ENCODE measurements at regions of chr17 and their contacts with region 1.

Region 1: GRCh38 chr17:55285340-55286301 is 20.9 kb downstream of the HLF start:
- DNase-seq: peak; percentile 99
- ATAC-seq: peak; percentile 37
- H3K4me3 ChIP-seq: peak overlapping the region; percentile 1 to 63 (median 3); a peak in 4 of 6 replicates
- H3K27ac ChIP-seq: peak overlapping the region; percentile 98
- H3K4me1 ChIP-seq: peaks cover 100% of the 10 kb centered on the region
- H3K27me3 ChIP-seq: no peaks in the 10 kb centered on the region
- CTCF ChIP-seq: no peak
- EP300 ChIP-seq: peak; percentile 82 to 100; a peak in 3 of 4 replicates
- POLR2A ChIP-seq: peak; percentile 46 to 71
- RAD21 ChIP-seq: no peak; the same call in 1 of the 2 replicates

Region 2: GRCh38 chr17:54968262-54968987 is 317.2 kb before region 1 on chr17 and contains the starts of genes COX11 and STXBP4:
- CTCF ChIA-PET with region 1: no interaction called
- POLR2A ChIA-PET with region 1: interaction called, 4 read pairs
- in situ Hi-C with region 1: no loop called
- intact Hi-C with region 1: loop called (anchors 10 kb)
- DNase-seq: peak; percentile 97
- ATAC-seq: peak; percentile 89
- H3K4me3 ChIP-seq: peak within 1 kb of the TSS; percentile 79 to 99 (median 93)
- H3K27ac ChIP-seq: peak within 1 kb of the TSS; percentile 82
- H3K4me1 ChIP-seq: peaks cover 68% of the 10 kb centered on the region
- H3K27me3 ChIP-seq: no peaks in the 10 kb centered on the region; a peak in 1 of 5 replicates
- CTCF ChIP-seq: peak; percentile 62
- EP300 ChIP-seq: peak in 1 of 2 experiments; percentile 11; a peak in 1 of 4 replicates
- POLR2A ChIP-seq: peak; percentile 97 to 98
- RAD21 ChIP-seq: peak; percentile 36; the same call in 1 of the 2 replicates
- total RNA-seq, gene COX11: 203 and 230 TPM in 2 replicates
- total RNA-seq, gene STXBP4: 36.1 and 53.9 TPM in 2 replicates

Region 3: DNA sequence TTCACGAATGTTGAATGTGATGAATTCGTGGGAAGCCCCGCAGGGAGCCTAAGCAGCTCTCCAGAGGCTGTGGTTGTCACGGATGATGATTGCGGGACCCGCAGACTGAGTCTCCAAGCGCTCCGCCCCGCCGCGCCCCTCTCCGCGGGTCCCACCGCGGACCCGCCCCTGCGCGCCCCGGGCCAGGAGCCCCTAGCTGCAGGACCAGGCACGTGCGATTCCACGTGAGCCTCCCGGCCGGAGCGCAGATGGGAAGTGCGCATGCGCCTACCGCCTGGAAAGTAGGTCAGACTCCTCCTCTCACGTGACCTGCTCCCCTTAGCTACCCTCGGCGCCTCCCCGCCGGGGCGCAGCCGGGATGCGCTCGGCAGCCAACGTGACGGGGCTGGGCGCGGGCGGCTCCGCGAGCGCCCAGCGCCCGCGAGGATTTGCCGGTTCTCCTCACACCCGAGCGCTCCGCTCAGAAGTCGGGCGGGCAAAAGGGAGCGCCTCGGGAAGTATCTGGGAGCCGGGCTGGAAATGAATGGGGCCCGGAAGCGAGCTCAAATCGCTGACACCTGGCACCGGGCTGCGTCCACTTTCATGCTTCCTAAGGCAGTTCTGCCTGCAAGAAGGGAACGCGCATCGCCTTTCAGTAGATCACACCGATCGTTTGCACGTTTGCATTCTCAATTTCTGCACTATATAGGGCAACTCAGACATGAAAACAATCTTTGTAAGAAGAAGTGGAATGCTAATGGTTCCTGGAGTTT is 47.3 kb before region 1 on chr17:
- CTCF ChIA-PET with region 1: no interaction called
- POLR2A ChIA-PET with region 1: interaction called, 81 read pairs
- in situ Hi-C with region 1: no loop called
- intact Hi-C with region 1: no loop called
- DNase-seq: peak; percentile 94
- ATAC-seq: peak; percentile 99
- H3K4me3 ChIP-seq: peak overlapping the region; percentile 61 to 77 (median 70)
- H3K27ac ChIP-seq: peak overlapping the region; percentile 72
- H3K4me1 ChIP-seq: peaks cover 23% of the 10 kb centered on the region
- H3K27me3 ChIP-seq: no peaks in the 10 kb centered on the region; a peak in 1 of 5 replicates
- CTCF ChIP-seq: peak; percentile 22; the same call in 1 of the 2 replicates
- EP300 ChIP-seq: peak in 1 of 2 experiments; percentile 30; a peak in 2 of 4 replicates
- POLR2A ChIP-seq: peak; percentile 66
- RAD21 ChIP-seq: peak; percentile 26

Region 4: GRCh38 chr17:55273579-55274354 is 11.9 kb before region 1 on chr17:
- CTCF ChIA-PET with region 1: no interaction called
- POLR2A ChIA-PET with region 1: interaction called, 626 read pairs
- in situ Hi-C with region 1: no loop called
- intact Hi-C with region 1: loop called (anchors 1 kb)
- DNase-seq: no peak
- ATAC-seq: peak; percentile 46
- H3K4me3 ChIP-seq: peak overlapping the region; percentile 81 to 93 (median 83)
- H3K27ac ChIP-seq: peak overlapping the region; percentile 84
- H3K4me1 ChIP-seq: peaks cover 72% of the 10 kb centered on the region
- H3K27me3 ChIP-seq: peaks cover 0 to 3% of the 10 kb centered on the region in 2 experiments; a peak in 1 of 5 replicates
- CTCF ChIP-seq: 0 out of 2 replicates have a peak, but pooled peaks have one; percentile 6
- EP300 ChIP-seq: no peak
- POLR2A ChIP-seq: peak in 1 of 2 experiments; percentile 48; a peak in 1 of 4 replicates
- RAD21 ChIP-seq: 0 out of 2 replicates have a peak, but pooled peaks have one; percentile 14

Region 5: GRCh38 chr17:55308613-55309391 is 23.2 kb after region 1 on chr17:
- CTCF ChIA-PET with region 1: no interaction called
- POLR2A ChIA-PET with region 1: interaction called, 119 read pairs
- in situ Hi-C with region 1: no loop called
- intact Hi-C with region 1: loop called (anchors 1 kb)
- DNase-seq: no peak
- ATAC-seq: no peak
- H3K4me3 ChIP-seq: no peak overlapping the region
- H3K27ac ChIP-seq: peak overlapping the region; percentile 86
- H3K4me1 ChIP-seq: peaks cover 100% of the 10 kb centered on the region
- H3K27me3 ChIP-seq: no peaks in the 10 kb centered on the region
- CTCF ChIP-seq: no peak
- EP300 ChIP-seq: no peak
- POLR2A ChIP-seq: peak; percentile 38 to 45; a peak in 2 of 4 replicates
- RAD21 ChIP-seq: no peak

Region 6: DNA sequence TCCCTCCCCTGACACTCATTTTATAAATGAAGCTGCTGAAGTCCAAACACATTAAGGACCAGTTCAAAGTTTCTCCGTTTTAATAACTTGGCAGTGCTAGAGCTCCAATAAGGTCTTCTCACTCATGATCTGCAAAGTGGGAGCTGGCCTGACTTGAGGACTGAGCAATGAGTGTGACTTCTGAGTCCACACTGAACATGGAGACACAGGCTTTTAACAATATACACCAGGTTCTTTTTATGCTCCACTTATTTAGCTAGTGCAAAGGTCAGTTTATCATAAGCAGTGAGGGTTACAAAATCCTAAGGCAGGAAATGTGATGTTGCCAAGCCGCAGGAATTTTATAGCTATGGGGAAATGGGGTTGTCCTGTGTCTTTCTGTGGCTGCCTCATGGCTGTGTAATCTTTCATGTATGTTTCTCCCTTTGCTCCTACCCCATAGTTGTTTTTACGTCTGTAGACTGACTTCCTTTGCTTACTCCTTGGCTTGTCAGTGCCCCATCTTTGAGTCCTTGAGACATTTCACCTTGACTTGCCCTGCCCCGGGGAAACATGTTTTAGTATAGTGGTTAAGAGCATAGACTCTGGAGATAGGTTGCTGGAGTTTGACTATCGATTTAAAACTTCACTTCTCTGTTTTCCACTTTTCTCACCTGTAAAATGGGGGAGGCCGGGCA is 148.1 kb after region 1 on chr17:
- CTCF ChIA-PET with region 1: no interaction called
- POLR2A ChIA-PET with region 1: interaction called, 29 read pairs
- in situ Hi-C with region 1: no loop called
- intact Hi-C with region 1: loop called (anchors 5 kb)
- DNase-seq: peak; percentile 99
- ATAC-seq: peak; percentile 89
- H3K4me3 ChIP-seq: peak overlapping the region in 2 of 3 experiments; percentile 6 to 44; a peak in 2 of 6 replicates
- H3K27ac ChIP-seq: peak overlapping the region; percentile 92
- H3K4me1 ChIP-seq: peaks cover 80% of the 10 kb centered on the region
- H3K27me3 ChIP-seq: no peaks in the 10 kb centered on the region
- CTCF ChIP-seq: no peak
- EP300 ChIP-seq: peak; percentile 86 to 95; a peak in 3 of 4 replicates
- POLR2A ChIP-seq: peak; percentile 64 to 93
- RAD21 ChIP-seq: no peak

Region 7: DNA sequence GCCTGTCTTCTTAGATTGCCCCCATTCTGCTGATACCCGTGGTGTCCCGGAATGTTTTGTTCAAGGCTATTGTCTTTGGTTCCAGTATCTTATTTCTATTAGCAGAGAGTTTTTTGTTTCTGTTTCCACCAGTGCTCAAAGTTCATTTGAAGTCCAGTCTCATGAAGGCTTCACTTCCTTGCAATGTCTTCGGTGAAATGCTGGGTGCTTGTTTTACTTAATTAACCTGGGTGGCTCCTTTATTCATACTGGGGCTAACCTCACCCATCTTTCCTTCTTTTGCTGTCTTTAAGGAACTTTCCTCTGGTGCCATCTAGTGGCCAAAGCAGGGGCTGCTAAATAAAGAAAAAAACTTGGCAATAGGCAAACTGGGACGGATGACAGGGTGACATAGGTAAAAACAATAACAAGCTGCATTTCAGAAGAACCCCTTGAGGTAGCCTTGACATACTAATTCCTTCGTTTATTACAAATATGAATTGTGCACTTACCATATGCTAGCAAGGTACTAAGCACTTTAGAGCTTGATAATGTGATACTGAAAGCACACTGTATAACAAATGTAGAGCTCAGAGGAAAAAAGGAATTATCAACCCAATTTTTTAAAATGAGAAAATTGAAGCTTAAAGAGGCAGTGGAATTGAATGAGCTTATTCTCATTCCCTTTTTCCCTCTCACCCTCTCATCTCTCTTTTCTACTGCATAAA is 228.4 kb after region 1 on chr17:
- CTCF ChIA-PET with region 1: no interaction called
- POLR2A ChIA-PET with region 1: no interaction called
- in situ Hi-C with region 1: no loop called
- intact Hi-C with region 1: no loop called
- DNase-seq: peak; percentile 84
- ATAC-seq: peak; percentile 81
- H3K4me3 ChIP-seq: no peak overlapping the region
- H3K27ac ChIP-seq: no peak overlapping the region
- H3K4me1 ChIP-seq: peaks cover 31% of the 10 kb centered on the region
- H3K27me3 ChIP-seq: peaks cover 0 to 1% of the 10 kb centered on the region in 2 experiments; a peak in 1 of 5 replicates
- CTCF ChIP-seq: peak; percentile 93
- EP300 ChIP-seq: 0 out of 4 replicates have a peak, but pooled peaks of 1 of the 2 experiments have one; percentile 12
- POLR2A ChIP-seq: no peak
- RAD21 ChIP-seq: peak; percentile 90

Region 8: DNA sequence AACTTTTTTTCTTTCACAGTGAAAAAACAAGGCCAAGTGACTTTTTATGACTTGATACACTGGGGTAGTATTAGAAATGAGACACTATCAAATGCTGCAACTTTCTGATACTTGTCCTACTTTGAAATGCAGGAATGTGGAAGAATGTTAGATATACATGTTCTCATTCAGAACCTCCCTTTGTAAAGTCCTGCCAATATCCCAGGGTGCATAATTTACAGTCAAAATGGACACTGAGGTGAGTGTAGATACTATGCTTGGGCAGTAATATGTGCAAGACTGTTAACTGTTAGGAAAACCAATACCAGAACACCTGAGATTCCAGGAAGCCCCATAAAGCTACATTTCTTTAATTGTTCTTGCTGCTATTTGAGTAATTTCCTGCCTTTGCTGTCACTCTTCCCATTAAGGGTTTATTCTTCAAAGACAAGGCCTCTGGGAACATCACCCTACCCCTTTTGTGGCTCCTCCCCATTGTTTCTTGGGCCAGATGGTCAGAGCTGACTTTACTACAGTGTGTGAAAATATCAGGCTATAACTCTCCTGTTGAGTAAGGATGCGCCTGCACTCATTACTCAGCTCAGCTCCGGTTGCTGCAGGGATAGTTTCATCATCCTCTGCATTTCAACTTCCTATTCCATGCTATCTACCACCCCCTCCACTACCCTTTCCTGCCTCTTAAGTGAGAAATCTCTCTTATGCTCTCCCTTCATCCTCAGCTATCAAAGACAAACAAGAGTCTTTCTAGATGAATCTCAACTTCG is 388.3 kb after region 1 on chr17:
- CTCF ChIA-PET with region 1: no interaction called
- POLR2A ChIA-PET with region 1: no interaction called
- in situ Hi-C with region 1: no loop called
- intact Hi-C with region 1: no loop called
- DNase-seq: no peak
- ATAC-seq: no peak
- H3K4me3 ChIP-seq: no peak overlapping the region
- H3K27ac ChIP-seq: no peak overlapping the region
- H3K4me1 ChIP-seq: no peaks in the 10 kb centered on the region
- H3K27me3 ChIP-seq: no peaks in the 10 kb centered on the region; a peak in 2 of 5 replicates
- CTCF ChIP-seq: no peak
- EP300 ChIP-seq: no peak
- POLR2A ChIP-seq: no peak
- RAD21 ChIP-seq: no peak

Measured in HepG2 (cell line).